Left ventricle myocardium inferior (tissue), 1 donor: ENCODE measurements at regions of chr16 and their contacts with region 1.

Region 1: DNA sequence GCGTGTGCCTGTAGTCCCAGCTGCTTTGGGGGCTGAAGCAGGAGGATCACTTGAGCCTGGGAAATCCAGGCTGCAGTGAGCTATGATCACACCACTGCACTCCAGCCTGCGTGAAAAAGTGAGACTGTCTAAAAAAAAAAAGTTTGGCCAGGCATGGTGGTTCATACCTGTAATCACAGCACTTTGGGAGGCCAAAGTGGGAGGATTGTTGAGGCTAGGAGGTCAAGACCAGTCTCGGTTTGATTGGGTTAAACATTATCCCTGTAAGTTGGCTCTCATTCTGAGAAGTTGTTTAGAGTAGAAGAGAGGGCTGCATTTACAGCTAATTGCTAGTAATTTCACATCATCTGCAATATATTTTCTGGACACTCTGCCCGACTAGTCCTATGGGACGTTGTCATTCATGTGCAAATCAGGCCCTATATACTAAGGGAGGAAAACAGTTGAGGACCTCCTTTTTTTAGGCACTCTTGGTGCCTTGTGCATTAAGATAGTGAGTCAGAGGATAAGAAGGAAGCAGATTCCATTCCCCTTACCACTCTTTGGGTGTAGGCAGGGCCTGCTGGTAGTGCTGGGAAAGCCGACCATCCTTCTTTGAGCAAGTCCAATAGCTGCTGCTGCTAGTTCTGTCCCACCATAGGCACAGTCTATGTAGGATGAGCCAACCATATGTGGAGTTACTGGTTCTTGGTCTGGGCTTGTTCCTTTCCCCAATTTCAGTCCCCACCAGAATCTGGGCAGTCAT is 18.7 kb downstream of the HMOX2 start:
- DNase-seq: no peak
- H3K4me3 ChIP-seq: no peak overlapping the region
- H3K27ac ChIP-seq: peak overlapping the region; percentile 20
- H3K4me1 ChIP-seq: peaks cover 51% of the 10 kb centered on the region
- H3K27me3 ChIP-seq: no peaks in the 10 kb centered on the region
- CTCF ChIP-seq: no peak

Region 2: GRCh38 chr16:4556112-4556511 is 61.2 kb after region 1 on chr16 and contains the start of gene C16orf96:
- intact Hi-C with region 1: loop called (anchors 10 kb)
- DNase-seq: no peak
- H3K4me3 ChIP-seq: no peak within 1 kb of the TSS
- H3K27ac ChIP-seq: no peak within 1 kb of the TSS
- H3K4me1 ChIP-seq: no peaks in the 10 kb centered on the region
- H3K27me3 ChIP-seq: no peaks in the 10 kb centered on the region
- CTCF ChIP-seq: no peak
- total RNA-seq, gene C16orf96: 0.08 TPM

Region 3: GRCh38 chr16:4593069-4593468 is 98.2 kb after region 1 on chr16:
- intact Hi-C with region 1: no loop called
- DNase-seq: no peak
- H3K4me3 ChIP-seq: no peak overlapping the region
- H3K27ac ChIP-seq: no peak overlapping the region
- H3K4me1 ChIP-seq: no peaks in the 10 kb centered on the region
- H3K27me3 ChIP-seq: peaks cover 7% of the 10 kb centered on the region
- CTCF ChIP-seq: no peak